HCT116 (cell line): ENCODE measurements at regions of chr15 and their contacts with region 1.

Region 1: DNA sequence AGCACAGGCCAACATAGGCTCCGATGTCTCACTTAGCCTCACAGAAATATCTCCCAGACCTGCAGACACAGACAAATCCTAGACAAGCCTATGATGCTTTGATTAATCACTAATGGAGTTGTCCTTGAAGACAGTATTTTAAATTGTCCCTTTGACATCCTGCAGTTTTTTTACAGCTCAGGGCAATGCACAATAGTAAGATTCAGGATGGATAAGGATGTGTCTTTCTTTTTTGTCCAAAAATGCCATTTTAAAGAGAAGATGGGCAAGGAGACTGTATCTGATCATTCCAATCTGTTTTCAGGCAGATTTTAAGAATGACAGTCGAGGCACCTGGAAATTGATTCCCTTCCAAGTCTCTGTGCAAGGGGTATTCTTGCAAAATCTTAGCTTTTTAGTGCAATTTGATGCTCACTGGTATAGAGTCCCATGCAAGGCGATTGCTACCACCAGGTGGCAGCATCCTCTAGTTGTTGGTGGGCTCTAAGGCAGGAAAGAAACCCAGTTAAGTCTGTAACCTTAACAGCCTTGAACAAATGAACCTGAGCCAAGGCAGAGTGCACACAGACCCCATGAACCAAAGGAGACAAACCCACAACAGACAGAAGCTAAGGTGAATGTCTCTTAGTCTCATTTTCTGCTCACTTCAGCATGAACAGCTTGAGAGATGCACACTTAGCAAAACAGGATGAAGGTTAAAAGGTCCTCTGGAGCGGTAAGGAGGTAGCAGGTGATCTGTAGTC is 51.2 kb upstream of the MINAR1 start:
- DNase-seq: peak; percentile 40
- ATAC-seq: peak; percentile 99
- H3K4me3 ChIP-seq: no peak overlapping the region
- H3K27ac ChIP-seq: no peak overlapping the region
- H3K4me1 ChIP-seq: no peaks in the 10 kb centered on the region
- H3K27me3 ChIP-seq: no peaks in the 10 kb centered on the region
- CTCF ChIP-seq: peak; percentile 89 to 92 (median 92)
- POLR2A ChIP-seq: no peak
- RAD21 ChIP-seq: peak; percentile 81

Region 2: GRCh38 chr15:79091204-79091867 is 289.6 kb before region 1 on chr15:
- CTCF ChIA-PET with region 1: no interaction called
- POLR2A ChIA-PET with region 1: no interaction called
- RAD21 ChIA-PET with region 1: no interaction called
- intact Hi-C with region 1: no loop called
- DNase-seq: no peak
- ATAC-seq: no peak
- H3K4me3 ChIP-seq: no peak overlapping the region
- H3K27ac ChIP-seq: no peak overlapping the region
- H3K4me1 ChIP-seq: no peaks in the 10 kb centered on the region
- H3K27me3 ChIP-seq: peaks cover 29% of the 10 kb centered on the region; the same call in 1 of the 2 replicates
- CTCF ChIP-seq: no peak
- POLR2A ChIP-seq: no peak
- RAD21 ChIP-seq: no peak

Region 3: DNA sequence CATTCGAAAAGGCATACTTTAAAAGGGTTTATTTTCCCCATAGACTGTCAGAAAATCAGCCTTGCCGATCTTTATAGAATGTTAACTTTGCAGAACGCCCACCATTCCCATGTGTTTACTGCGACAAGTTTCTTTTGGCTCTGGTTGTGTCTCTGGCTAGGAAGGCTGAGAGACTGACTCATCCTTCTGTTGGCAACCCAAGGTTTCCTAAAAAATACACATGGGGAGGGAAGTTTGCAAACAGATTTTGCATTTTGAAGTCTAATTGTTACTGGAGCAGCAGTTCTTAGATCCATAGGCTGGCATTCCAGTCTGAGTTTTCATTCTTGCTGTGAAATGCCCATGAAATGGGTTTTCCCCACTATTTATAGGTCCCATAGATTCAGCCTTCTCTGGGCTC is 13.3 kb after region 1 on chr15:
- CTCF ChIA-PET with region 1: interaction called, 11 read pairs
- POLR2A ChIA-PET with region 1: no interaction called
- RAD21 ChIA-PET with region 1: no interaction called
- intact Hi-C with region 1: no loop called
- DNase-seq: no peak
- ATAC-seq: no peak
- H3K4me3 ChIP-seq: no peak overlapping the region
- H3K27ac ChIP-seq: no peak overlapping the region
- H3K4me1 ChIP-seq: no peaks in the 10 kb centered on the region
- H3K27me3 ChIP-seq: no peaks in the 10 kb centered on the region
- CTCF ChIP-seq: no peak
- POLR2A ChIP-seq: no peak
- RAD21 ChIP-seq: no peak

Region 4: DNA sequence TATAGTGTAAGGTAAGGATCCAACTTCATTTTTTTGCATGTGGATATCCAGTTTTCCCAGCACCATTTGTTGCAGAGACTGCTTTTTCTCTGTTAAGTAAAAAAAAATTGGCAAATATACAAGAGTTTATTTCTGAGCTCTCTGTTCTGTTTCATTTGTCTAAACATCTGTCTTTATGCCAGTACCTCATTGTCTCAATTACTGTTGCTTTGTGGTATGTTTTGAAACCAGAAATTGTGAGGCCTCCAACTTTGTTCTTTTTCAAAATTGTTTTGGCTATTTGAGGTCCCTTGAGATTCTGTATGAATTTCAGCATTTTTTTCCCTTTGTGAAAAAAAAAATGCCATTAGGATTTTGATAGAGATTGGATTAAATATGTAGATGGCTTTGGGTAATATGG is 201.7 kb after region 1 on chr15:
- CTCF ChIA-PET with region 1: interaction called, 11 read pairs
- POLR2A ChIA-PET with region 1: no interaction called
- RAD21 ChIA-PET with region 1: no interaction called
- intact Hi-C with region 1: loop called (anchors 5 kb)
- DNase-seq: no peak
- ATAC-seq: no peak
- H3K4me3 ChIP-seq: no peak overlapping the region
- H3K27ac ChIP-seq: no peak overlapping the region
- H3K4me1 ChIP-seq: no peaks in the 10 kb centered on the region
- H3K27me3 ChIP-seq: peaks cover 53% of the 10 kb centered on the region
- CTCF ChIP-seq: no peak
- POLR2A ChIP-seq: no peak
- RAD21 ChIP-seq: no peak

Region 5: GRCh38 chr15:79853458-79854328 is 472.8 kb after region 1 on chr15:
- CTCF ChIA-PET with region 1: interaction called, 44 read pairs
- POLR2A ChIA-PET with region 1: no interaction called
- RAD21 ChIA-PET with region 1: interaction called in 1 of 2 experiments, 4 read pairs
- intact Hi-C with region 1: loop called (anchors 2 kb)
- DNase-seq: peak; percentile 47
- ATAC-seq: peak; percentile 98
- H3K4me3 ChIP-seq: no peak overlapping the region
- H3K27ac ChIP-seq: no peak overlapping the region
- H3K4me1 ChIP-seq: no peaks in the 10 kb centered on the region
- H3K27me3 ChIP-seq: no peaks in the 10 kb centered on the region
- CTCF ChIP-seq: peak; percentile 63 to 98 (median 94); a peak in 5 of 6 replicates
- POLR2A ChIP-seq: no peak
- RAD21 ChIP-seq: peak; percentile 63

Region 6: DNA sequence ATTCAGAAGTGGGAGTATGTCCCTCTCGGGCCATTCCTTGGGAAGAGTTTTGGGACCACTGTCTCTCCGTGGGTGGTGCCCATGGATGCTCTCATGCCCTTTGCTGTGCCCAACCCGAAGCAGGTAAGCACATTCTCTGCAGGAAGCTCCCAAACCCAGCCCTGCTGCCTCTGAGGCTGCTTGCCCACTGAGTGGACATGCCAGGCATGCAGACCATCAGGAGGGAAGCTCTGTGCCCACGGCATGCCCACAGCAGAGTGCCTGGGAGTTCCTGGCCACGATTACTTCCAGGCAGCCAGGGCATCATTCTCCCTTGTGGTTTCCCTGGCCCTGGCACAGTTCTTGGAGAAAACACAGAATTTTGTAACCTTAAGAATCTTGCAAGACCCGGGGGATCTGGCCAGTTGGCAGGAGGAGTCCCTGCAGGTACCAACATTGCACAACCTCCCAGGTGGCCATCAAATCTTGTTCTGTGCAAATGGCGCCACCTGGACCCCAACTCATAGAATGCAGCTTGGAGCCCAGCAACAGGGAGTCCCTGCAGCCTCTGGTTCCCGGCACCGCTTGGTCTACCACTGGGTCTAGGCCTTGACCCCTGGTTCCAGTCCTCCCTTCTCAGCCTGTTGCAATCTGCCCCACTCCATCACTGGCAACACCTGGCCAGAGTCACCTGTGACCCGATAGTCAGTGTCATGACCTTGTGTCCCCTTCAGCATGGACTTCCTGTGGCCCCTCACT is 792.3 kb after region 1 on chr15:
- CTCF ChIA-PET with region 1: interaction called, 6 read pairs
- POLR2A ChIA-PET with region 1: no interaction called
- RAD21 ChIA-PET with region 1: no interaction called
- intact Hi-C with region 1: loop called (anchors 5 kb)
- DNase-seq: peak; percentile 42
- ATAC-seq: peak; percentile 94
- H3K4me3 ChIP-seq: no peak overlapping the region
- H3K27ac ChIP-seq: no peak overlapping the region
- H3K4me1 ChIP-seq: no peaks in the 10 kb centered on the region
- H3K27me3 ChIP-seq: no peaks in the 10 kb centered on the region
- CTCF ChIP-seq: peak; percentile 69 to 79 (median 72)
- POLR2A ChIP-seq: no peak
- RAD21 ChIP-seq: peak; percentile 87